ENCODE measurements at regions of chr9 and their contacts with region 1.

Region 1: GRCh38 chr9:9598723-9599122 is 1014.1 kb downstream of the PTPRD start:
- DNase-seq: no peak
- H3K4me3 ChIP-seq: no peak overlapping the region
- H3K27ac ChIP-seq: no peak overlapping the region
- H3K4me1 ChIP-seq: no peaks in the 10 kb centered on the region
- H3K27me3 ChIP-seq: no peaks in the 10 kb centered on the region
- CTCF ChIP-seq: no peak
- EP300 ChIP-seq: no peak
- POLR2A ChIP-seq: no peak

Region 2: GRCh38 chr9:9538356-9538755 is 60.4 kb before region 1 on chr9:
- intact Hi-C with region 1: no loop called
- DNase-seq: no peak
- H3K4me3 ChIP-seq: no peak overlapping the region
- H3K27ac ChIP-seq: no peak overlapping the region
- H3K4me1 ChIP-seq: no peaks in the 10 kb centered on the region
- H3K27me3 ChIP-seq: no peaks in the 10 kb centered on the region
- CTCF ChIP-seq: no peak
- EP300 ChIP-seq: no peak
- POLR2A ChIP-seq: no peak

Region 3: DNA sequence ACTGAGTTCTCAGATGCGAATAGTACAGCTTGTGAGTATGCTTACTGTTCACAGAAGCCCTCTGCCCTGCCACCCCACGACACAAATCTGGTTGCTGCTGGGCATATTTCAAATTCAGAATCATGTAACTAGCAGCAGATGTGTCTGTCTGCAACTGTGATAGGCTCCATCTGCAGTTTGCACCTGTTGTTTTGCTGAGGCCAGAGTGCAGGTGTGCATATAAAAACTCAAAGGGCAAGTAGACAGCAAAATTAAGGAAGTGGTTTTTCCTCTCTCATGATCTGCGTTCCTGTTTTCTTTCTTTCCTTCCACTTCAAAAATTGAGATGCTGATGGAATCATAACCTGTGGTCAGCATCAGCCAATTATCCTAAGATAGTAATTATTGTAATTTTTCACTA is 13.5 kb after region 1 on chr9:
- intact Hi-C with region 1: loop called in 1 of 4 experiments (anchors 2 kb)
- DNase-seq: no peak
- H3K4me3 ChIP-seq: no peak overlapping the region
- H3K27ac ChIP-seq: no peak overlapping the region
- H3K4me1 ChIP-seq: no peaks in the 10 kb centered on the region
- H3K27me3 ChIP-seq: no peaks in the 10 kb centered on the region
- CTCF ChIP-seq: no peak
- EP300 ChIP-seq: no peak
- POLR2A ChIP-seq: no peak

Region 4: GRCh38 chr9:9730174-9730573 is 131.5 kb after region 1 on chr9:
- intact Hi-C with region 1: no loop called
- DNase-seq: no peak
- H3K4me3 ChIP-seq: no peak overlapping the region
- H3K27ac ChIP-seq: no peak overlapping the region
- H3K4me1 ChIP-seq: no peaks in the 10 kb centered on the region
- H3K27me3 ChIP-seq: no peaks in the 10 kb centered on the region
- CTCF ChIP-seq: no peak
- EP300 ChIP-seq: no peak
- POLR2A ChIP-seq: no peak

Region 5: GRCh38 chr9:10112798-10113197 is 514.1 kb after region 1 on chr9:
- intact Hi-C with region 1: no loop called
- DNase-seq: no peak
- H3K4me3 ChIP-seq: no peak overlapping the region
- H3K27ac ChIP-seq: no peak overlapping the region
- H3K4me1 ChIP-seq: no peaks in the 10 kb centered on the region
- H3K27me3 ChIP-seq: no peaks in the 10 kb centered on the region
- CTCF ChIP-seq: no peak
- EP300 ChIP-seq: no peak
- POLR2A ChIP-seq: no peak

Measured in ovary (tissue), 10 donors.